Activated naive CD4-positive, alpha-beta T cell treated with anti-CD3 and anti-CD28 coated beads, Interleukin-2, amount 10 ng/mL, durations not matched to agents 7 days and 5 days (primary cell): ENCODE measurements at regions of chr9 and their contacts with region 1.

Region 1: DNA sequence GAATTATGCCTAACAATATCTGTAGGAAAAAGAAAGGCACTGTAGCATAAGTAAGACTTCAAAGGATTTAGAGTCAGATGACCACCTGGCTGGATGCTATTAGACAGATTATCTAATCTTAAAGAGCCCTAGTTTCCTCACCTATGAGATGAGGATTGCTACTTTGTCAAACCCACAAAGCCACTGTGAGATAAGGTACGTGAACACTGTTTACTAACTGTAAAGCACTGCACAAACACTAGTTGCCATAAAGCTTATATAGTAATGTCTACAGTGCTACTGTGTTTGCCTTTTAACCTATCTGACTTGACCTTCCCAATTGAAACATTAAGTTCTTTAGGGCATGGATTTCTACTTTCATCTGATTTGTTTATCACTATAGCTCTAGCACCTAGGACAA is 10.3 kb downstream of the TRMO start:
- DNase-seq: no peak
- H3K4me3 Mint-ChIP-seq: no peak overlapping the region
- H3K27ac Mint-ChIP-seq: no peak overlapping the region
- H3K4me1 Mint-ChIP-seq: peaks cover 60% of the 10 kb centered on the region
- H3K27me3 Mint-ChIP-seq: no peaks in the 10 kb centered on the region

Region 2: GRCh38 chr9:97900738-97901565 is 11.0 kb before region 1 on chr9:
- CTCF ChIA-PET with region 1: interaction called, 11 read pairs
- DNase-seq: peak; percentile 36
- H3K4me3 Mint-ChIP-seq: no peak overlapping the region
- H3K27ac Mint-ChIP-seq: peak overlapping the region; percentile 86
- H3K4me1 Mint-ChIP-seq: peaks cover 62% of the 10 kb centered on the region
- H3K27me3 Mint-ChIP-seq: no peaks in the 10 kb centered on the region